ENCODE measurements at regions of chr1 and their contacts with region 1.

Region 1: DNA sequence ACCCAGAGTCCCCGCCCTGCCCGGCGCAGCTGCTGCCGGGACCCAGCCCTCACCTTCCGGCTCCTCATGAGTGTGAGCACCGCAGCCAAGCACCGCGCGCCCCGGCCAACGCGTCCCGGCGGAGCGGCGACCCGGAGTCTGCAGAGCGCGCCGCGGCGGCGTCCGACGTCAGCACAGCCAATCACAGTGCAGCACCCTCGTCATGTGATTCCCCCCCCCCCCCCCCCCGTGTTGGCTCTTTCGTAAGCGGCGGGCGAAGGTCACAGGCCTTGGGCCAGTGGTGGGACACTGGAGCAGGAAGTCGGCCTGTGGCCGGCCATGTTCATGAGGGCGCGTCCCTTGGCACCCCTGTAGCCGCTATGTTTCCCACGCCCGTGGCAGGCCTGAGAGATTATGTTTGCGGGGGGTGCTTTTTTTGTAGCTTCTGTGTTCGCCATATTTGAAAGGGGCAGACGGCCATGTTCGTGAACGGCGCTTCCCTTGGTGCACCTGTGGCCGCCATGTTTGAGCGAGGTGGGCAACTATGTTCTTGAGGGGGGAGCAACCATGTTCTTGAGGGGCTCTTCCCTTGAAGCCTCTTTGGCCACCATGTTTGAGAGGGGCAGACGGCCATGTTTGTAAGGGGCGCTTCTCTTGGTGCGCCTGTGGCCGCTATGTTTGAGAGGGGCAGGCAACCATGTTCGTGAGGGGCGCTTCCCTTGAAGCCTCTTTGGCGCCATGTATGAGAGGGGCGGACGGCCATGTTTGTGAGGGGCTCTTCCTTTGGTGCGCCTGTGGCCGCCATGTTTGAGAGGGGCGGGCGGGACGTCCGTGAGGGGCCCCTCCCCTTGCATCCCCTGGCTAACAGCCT is at the start of gene C1orf174:
- ATAC-seq: peak; percentile 72 to 85 (median 78)
- H3K4me3 ChIP-seq: peak within 1 kb of the TSS; percentile 57 to 86 (median 77)
- H3K27ac ChIP-seq: peak within 1 kb of the TSS; percentile 94 to 98
- H3K4me1 ChIP-seq: peaks cover 3 to 5% of the 10 kb centered on the region in 2 donors
- total RNA-seq, gene C1orf174: 11.7 to 34.0 (median 22.9) TPM

Region 2: DNA sequence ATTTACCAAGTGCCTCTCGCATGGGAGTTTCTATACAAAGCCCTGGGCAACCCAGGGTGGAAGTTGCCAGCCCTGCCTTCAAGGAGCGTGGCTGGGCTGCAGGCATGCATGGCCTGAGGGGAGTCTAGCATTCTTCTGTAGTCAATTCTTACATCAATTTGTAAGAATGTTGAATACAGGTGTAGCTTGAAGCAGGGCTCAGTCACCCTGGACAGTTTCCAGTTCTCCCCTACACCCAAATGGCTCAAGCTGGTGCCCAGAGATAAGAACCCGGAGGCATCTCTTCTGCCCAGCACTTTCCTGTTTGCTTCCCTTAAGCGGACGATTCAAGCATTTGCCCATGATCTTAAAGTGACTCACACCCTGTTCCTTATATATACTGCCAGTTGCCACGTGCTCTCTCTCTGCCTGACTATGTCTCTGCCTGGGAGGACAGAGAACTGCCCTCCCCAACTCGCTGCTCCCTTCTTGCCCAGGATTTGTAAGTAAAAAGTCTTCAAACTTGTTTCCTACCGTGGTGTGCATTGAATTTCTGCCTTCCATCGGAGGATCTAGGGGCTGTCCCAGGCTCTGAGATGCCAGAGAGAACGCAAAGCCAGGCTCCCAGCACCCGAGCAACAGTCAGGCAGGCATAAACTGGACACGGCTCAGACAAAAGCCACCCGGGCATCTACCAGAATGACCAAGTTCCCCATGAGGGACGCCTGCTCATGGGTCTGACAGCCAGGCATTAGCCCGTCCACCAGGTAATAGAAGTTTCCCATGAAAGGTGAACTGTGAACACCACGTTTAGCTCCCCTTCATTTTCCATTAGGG is 703.2 kb after region 1 on chr1:
- in situ Hi-C with region 1: loop called in 1 of 9 experiments (anchors 25 kb)
- ATAC-seq: peak in 1 of 8 experiments; percentile 80
- H3K4me3 ChIP-seq: no peak overlapping the region
- H3K27ac ChIP-seq: no peak overlapping the region
- H3K4me1 ChIP-seq: peaks cover 0 to 15% of the 10 kb centered on the region in 2 donors

Region 3: DNA sequence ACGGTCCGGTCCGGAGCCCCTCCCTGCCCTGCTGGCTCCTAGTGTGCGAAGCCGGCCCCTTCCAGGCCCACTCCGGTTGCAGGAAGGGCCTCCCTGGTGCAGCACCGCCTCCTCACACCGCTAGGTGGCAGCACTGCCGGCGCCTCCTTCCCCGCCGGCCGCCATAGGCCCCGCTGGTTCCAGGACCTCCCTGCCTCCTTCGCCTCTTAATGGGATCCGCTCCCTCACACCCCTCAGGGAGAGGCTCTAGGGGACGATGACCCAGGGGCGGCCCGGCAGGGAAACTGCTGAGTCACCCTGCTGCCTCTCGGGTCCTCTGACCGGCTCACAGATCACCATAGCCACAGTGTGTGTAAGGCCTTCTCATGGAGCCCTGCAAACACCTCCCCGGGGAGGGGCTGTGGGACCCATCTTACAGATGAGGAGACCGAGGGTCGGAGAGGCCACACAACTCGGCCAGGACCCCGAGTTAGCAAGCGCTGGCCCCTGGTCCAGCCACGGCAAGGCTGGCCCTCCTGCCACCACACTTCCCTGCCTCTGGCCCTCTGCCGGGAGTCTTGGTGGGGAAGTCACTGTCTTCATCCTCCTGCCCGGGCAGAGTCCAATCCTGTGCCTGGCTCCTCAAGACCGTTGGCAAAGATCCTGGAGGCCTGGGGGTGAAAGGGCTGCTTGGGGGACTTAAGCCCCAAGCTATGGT is 752.4 kb after region 1 on chr1:
- in situ Hi-C with region 1: loop called in 1 of 9 experiments (anchors 25 kb)
- ATAC-seq: peak in 7 of 8 experiments; percentile 22 to 86 (median 46)
- H3K4me3 ChIP-seq: no peak overlapping the region
- H3K27ac ChIP-seq: no peak overlapping the region
- H3K4me1 ChIP-seq: peaks cover 6 to 10% of the 10 kb centered on the region in 2 donors

Region 4: DNA sequence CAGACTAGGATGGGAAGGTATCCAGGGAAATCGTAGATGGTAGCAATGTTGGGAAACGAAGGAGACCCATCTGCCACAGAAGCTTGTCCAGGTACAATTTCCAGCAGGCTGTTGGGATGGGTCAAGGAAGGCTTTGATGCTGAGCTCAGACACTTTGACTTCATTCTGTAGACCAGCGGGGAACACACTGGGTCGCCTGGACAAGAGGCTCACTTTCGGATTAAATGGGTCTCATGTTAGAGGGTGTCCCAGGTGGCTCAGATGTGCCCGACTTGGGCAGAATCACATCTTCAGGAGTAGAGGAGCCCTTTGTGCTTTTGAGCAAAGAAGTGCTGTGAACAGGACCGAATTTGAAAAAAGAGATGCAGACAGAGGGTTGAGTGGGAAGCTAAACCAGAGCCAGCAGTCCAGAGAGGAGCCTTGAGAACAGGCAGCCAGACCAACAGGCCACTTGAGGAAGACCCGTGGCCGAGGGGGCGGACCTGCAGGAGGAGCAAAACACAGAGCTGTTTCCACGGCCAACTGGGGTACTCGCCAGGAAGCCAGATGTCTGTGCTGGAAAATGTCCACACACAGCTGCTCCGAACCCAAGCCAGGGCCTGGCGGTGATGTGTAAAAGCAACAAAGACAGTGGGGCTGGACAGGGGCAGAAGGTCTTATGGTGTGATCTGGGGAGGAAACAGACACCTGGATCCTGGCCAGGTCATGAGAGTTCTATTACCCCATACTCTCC is 901.0 kb after region 1 on chr1:
- in situ Hi-C with region 1: loop called in 1 of 9 experiments (anchors 25 kb)
- ATAC-seq: peak in 1 of 8 experiments; percentile 67
- H3K4me3 ChIP-seq: no peak overlapping the region
- H3K27ac ChIP-seq: no peak overlapping the region
- H3K4me1 ChIP-seq: no peaks in the 10 kb centered on the region

Region 5: DNA sequence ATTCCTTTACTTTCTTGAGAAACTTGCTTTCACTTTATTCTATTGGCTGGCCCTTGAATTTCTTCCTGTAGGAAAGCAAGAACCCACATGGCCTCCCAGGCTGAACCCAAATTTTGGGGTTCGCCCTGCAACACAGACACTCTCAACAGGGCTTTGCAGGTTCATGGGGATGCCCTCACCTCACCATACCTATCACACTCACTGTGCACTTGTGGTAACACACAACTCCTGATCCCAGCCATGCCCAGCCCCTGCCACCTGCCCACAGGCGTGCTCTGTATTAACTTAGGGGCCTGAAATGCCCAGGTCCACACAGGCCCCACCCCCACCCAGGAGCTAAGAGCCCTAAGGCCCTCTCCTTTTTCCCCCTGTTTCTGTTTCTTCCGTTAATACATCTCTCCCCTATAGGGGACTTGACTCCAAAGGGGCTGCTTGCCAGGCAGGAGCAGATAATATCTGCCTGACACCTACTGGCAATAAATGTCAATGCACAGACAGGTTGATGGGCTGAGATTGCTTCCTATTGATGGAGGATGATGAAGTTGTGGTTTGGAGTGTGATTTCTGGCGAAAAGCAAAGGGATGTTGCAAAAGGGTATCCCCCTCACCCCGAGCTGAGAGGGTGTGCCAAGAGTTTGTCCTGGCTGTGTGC is 925.6 kb after region 1 on chr1:
- in situ Hi-C with region 1: loop called in 2 of 9 experiments (anchors 25 kb)
- ATAC-seq: peak in 6 of 8 experiments; percentile 16 to 88 (median 84)
- H3K4me3 ChIP-seq: no peak overlapping the region
- H3K27ac ChIP-seq: no peak overlapping the region
- H3K4me1 ChIP-seq: no peaks in the 10 kb centered on the region

Region 6: GRCh38 chr1:5745776-5746610 is 1845.6 kb after region 1 on chr1:
- in situ Hi-C with region 1: loop called in 1 of 9 experiments (anchors 25 kb)
- ATAC-seq: peak; percentile 78 to 98 (median 90)
- H3K4me3 ChIP-seq: no peak overlapping the region
- H3K27ac ChIP-seq: no peak overlapping the region
- H3K4me1 ChIP-seq: peaks cover 10 to 22% of the 10 kb centered on the region in 2 donors